Naive thymus-derived CD8-positive, alpha-beta T cell (primary cell): ENCODE measurements at regions of chr6 and their contacts with region 1.

Region 1: DNA sequence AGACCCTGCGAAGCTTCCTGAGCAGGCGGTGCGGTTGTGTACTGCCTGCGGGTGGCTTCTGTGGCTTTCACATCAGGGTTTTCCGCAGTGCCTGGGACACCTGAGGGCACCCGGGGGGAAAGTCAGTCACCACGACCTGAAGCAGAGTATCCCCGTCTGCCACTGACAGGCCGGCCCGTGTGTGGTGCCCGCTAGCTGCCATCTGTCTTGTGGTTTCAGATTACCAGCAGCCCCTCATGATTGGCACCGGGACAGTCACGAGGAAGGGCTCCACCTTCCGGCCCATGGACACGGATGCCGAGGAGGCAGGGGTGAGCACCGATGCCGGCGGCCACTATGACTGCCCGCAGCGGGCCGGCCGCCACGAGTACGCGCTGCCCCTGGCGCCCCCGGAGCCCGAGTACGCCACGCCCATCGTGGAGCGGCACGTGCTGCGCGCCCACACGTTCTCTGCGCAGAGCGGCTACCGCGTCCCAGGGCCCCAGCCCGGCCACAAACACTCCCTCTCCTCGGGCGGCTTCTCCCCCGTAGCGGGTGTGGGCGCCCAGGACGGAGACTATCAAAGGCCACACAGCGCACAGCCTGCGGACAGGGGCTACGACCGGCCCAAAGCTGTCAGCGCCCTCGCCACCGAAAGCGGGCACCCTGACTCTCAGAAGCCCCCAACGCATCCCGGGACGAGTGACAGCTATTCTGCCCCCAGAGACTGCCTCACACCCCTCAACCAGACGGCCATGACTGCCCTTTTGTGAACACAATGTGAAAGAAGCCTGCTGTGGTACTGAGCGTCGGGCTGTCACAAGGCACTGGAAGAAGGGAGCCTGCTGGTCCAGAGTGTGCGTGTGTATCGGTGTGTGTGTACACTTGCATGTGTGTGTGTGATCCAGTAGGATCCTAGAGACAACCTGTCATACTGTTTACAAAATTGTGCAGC is 54.4 kb downstream of the GOPC start:
- DNase-seq: peak; percentile 20 to 70 (median 50)
- ATAC-seq: peak; percentile 49 to 75
- H3K4me3 Mint-ChIP-seq: peak overlapping the region; percentile 84 to 92 (median 90)
- H3K27ac Mint-ChIP-seq: peak overlapping the region; percentile 82 to 97 (median 93)
- H3K4me1 Mint-ChIP-seq: peaks cover 11 to 50% (median 42%) of the 10 kb centered on the region in 4 donors
- H3K27me3 Mint-ChIP-seq: no peaks in the 10 kb centered on the region

Region 2: GRCh38 chr6:117317261-117317660 is 230.7 kb before region 1 on chr6:
- POLR2A ChIA-PET with region 1: no interaction called
- DNase-seq: no peak
- ATAC-seq: no peak
- H3K4me3 Mint-ChIP-seq: no peak overlapping the region
- H3K27ac Mint-ChIP-seq: no peak overlapping the region
- H3K4me1 Mint-ChIP-seq: no peaks in the 10 kb centered on the region
- H3K27me3 Mint-ChIP-seq: peaks cover 0 to 11% (median 6%) of the 10 kb centered on the region in 5 donors

Region 3: GRCh38 chr6:117482240-117483003 is 65.5 kb before region 1 on chr6 and contains the start of gene DCBLD1:
- POLR2A ChIA-PET with region 1: interaction called, 45 read pairs
- DNase-seq: peak; percentile 17 to 66 (median 43)
- ATAC-seq: peak; percentile 60 to 78
- H3K4me3 Mint-ChIP-seq: peak within 1 kb of the TSS; percentile 78 to 94 (median 90)
- H3K27ac Mint-ChIP-seq: peak within 1 kb of the TSS; percentile 18 to 84 (median 60)
- H3K4me1 Mint-ChIP-seq: peaks cover 9 to 20% (median 17%) of the 10 kb centered on the region in 4 donors
- H3K27me3 Mint-ChIP-seq: peaks cover 14 to 36% (median 25%) of the 10 kb centered on the region in 5 donors
- polyA plus RNA-seq, gene DCBLD1: 2.9 to 3.6 (median 3.0) TPM

Region 4: GRCh38 chr6:117602151-117602898 is 54.4 kb after region 1 on chr6 and contains the start of gene GOPC:
- POLR2A ChIA-PET with region 1: interaction called, 46 read pairs
- DNase-seq: peak; percentile 87 to 98 (median 96)
- ATAC-seq: peak; percentile 93 to 95
- H3K4me3 Mint-ChIP-seq: peak within 1 kb of the TSS; percentile 97 to 100 (median 99)
- H3K27ac Mint-ChIP-seq: peak within 1 kb of the TSS; percentile 94 to 99 (median 99)
- H3K4me1 Mint-ChIP-seq: peaks cover 16 to 52% (median 36%) of the 10 kb centered on the region in 4 donors
- H3K27me3 Mint-ChIP-seq: peaks cover 0 to 2% (median 0%) of the 10 kb centered on the region in 5 donors
- polyA plus RNA-seq, gene GOPC: 11.8 to 14.2 (median 11.8) TPM